ENCODE measurements at regions of chr6 and their contacts with region 1.

Region 1: DNA sequence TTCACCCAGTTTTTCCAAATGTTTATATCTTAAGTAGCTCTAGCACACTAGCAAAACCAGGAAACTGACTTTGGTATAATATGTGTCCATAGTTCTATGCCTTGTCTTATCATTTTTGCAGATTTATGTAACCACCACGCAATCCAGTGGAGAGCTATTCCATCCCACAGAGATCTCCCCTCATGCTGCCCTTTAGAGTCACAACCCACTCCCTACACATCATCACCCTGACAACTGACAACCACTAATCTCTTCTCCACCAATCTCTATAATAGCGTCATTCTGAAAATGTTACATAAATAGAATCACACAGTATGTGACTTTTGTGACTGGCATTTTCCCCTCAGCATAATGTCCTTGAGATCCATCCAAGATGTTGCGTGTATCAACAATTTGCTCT is 29.1 kb downstream of the HLA-DRB5 start:
- DNase-seq: no peak
- H3K4me3 Mint-ChIP-seq: no peak overlapping the region
- H3K27ac Mint-ChIP-seq: no peak overlapping the region
- H3K4me1 Mint-ChIP-seq: no peaks in the 10 kb centered on the region
- H3K27me3 Mint-ChIP-seq: peaks cover 25% of the 10 kb centered on the region

Region 2: DNA sequence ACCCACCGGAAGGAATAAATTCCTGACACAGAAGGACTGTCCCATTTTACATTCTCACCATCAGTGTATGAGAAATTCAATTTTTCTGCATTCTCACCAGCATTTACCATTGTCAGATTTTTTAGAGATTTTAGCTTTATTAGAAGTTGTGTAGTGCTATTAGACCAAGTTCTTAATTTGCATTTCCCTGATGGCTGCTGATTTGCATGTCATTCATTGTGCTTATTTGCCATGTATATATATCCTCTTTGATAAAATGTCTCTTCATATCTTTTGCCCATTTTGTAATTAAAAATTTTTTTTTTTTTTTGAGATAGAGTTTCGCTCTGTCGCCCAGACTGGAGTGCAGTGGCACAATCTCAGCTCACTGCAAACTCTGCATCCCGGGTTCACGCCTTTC is 38.8 kb after region 1 on chr6:
- intact Hi-C with region 1: loop called (anchors 1 kb)
- DNase-seq: no peak
- H3K4me3 Mint-ChIP-seq: no peak overlapping the region
- H3K27ac Mint-ChIP-seq: no peak overlapping the region
- H3K4me1 Mint-ChIP-seq: no peaks in the 10 kb centered on the region
- H3K27me3 Mint-ChIP-seq: peaks cover 36% of the 10 kb centered on the region

Measured in activated T-helper 2 cell treated with anti-CD3 and anti-CD28 coated beads, Interferon-gamma antibody, Interleukin-2, Interleukin-4, amounts not matched to agents 10 μg/mL and 5 μg/mL and 100 μg/mL, durations not matched to agents 14 hours and 24 hours and 36 hours (primary cell).